ENCODE measurements at regions of chr11 and their contacts with region 1.

Region 1: DNA sequence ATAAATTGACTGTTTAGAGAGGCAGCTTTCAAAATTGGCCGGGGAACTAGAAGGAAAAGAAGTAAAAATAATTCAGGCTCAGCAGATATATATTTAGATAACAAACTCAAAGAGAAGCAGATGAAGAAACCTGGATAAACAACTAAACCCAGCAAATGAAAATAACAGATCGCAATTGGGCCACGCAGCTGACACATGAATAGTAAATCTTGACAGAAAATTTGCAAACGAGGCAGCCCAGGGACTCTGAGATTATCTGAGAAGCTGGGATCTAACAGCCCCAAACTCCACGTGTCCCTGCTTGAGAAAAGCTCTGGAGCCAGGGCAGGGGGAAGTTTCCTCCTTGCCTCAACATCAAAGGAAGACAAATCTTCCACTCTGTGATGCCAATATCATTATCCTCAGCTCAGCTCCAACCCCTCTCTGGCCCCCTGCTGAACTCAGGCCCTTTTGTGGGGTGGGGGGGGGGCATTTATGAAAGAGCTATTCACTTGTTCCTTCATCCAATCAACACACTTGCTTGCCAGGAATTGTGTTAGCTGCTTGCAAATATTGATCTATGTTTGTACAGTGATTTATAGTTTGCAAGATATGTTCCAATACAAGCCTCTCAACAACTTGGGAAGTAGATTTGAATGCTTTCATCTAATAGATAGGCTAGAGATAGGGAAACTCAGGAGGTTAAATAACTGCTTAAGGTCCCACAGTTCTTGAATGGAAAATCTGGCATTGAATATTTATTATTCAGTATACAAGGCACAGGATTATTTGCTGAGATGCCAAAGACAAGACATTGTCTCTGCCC is 72.5 kb upstream of the C11orf87 start:
- DNase-seq: no peak
- ATAC-seq: no peak

Region 2: DNA sequence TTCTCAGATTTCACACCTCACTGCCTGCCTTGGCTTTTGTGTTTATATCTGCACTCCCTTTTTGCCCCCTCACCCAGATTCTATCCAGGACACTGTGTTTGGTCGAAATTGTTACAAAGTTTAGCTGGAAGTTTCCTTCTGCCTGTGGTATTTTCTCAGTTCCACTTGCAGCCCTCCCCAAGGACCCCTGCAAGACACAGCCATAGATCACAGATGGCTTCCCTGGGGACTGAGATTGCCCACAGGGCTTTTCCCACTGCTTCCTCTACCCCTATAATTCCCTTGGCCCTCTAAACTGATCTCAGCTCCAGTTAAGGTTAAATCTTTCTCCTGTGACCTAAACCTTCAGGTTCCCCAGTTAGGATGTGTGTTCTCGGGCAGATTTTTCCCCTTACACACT is 73.5 kb before region 1 on chr11:
- intact Hi-C with region 1: no loop called
- DNase-seq: no peak
- ATAC-seq: no peak

Region 3: DNA sequence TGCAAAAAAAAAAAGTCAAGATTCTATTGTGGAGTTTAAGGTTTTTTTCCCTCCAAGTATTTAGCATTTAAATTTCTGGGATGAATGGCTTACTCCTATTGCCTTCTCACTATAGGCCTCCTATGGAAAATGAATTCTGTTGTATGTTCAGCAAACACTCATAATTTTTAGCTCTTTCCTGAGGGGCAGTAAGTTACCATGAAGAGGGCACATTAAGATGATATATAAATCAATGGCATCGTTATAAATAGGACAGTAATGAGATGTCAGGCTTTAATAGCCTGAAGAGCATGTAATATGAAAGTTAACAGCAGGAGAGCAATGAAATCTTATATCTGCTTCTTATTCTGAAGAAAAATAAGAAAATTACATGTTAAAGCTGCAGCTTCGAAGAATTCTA is 105.4 kb after region 1 on chr11:
- intact Hi-C with region 1: no loop called
- DNase-seq: no peak
- ATAC-seq: no peak

Region 4: DNA sequence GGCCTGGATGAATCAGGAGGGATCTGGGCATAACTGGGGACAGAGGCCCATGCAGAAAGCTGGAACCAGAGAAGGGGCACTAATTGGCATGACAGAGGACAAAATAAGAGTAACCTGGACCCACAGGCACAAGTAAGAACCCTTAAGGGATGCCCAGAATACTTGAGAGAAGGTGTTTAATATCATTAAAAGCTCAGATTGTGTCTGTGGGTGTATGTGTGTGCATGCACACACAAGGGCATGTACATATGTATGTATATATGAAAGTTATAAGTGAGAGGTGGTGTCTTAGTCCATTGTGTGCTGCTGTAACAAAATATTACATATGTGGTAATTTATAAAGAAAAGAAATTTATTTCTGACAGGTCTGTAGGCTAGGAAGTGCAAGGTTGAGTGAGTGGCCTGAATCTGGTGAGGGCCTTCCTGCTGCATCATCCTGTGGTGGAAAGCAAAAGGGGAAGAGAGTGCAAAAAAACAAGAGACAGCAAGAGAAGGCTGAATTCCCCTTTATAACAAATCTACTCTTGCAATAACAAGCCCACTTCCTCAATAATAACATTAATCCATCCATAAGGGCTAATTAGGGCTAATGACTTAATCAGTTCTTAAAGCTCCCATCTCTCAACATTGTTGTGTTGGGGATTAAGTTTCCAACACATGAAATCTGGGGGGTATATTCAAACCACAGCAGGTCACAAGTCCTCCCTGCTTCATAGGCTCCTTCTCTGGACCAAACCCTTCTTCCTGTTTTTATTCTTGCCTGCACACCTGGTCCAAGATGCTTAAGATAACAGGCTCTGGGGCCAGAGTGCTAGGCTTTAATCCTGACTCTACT is 1827.8 kb after region 1 on chr11:
- intact Hi-C with region 1: loop called (anchors 5 kb)
- DNase-seq: no peak
- ATAC-seq: no peak